ENCODE measurements at regions of chr12 and their contacts with region 1.

Region 1: DNA sequence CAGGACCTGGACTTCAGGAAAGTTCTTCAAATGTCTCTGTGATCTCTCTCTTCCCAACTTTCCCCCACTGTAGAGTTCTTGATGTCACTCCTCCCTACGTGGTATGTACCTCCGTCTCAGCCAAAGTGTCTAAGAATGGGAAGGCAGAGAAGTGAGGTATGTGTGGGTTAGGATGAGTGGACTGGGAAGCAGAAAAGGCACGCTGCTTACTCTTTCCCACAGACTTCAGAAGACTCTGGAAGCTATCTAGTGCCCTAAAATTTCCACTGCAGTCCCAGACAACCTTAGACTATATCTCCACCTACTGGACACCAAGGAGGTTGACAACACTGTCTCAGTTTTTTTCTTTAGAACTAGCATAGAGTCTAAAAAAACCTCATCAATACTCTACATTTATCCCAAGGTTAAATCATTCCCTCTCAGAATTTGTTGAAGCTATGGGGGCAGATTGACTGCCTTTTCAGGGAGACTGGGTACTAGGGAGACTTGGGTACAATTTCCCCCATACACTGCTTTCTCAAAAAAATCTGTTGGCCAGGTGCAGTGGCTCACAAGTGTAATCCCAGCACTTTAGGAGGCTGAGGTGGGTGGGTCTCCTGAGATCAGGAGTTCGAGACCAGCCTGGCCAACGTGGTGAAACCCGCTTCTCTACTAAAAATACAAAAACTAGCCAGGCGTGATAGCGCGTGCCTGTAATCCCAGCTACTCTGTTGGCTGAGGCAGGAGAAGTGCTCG is 20.6 kb upstream of the ITGA5 start:
- DNase-seq: peak in 1 of 10 donors; percentile 28
- H3K4me3 ChIP-seq: no peak overlapping the region
- H3K27ac ChIP-seq: peak overlapping the region in 1 of 59 donors; percentile 40
- H3K27me3 ChIP-seq: peaks cover 0 to 5% (median 0%) of the 10 kb centered on the region in 45 donors
- CTCF ChIP-seq: peak; percentile 58 to 90 (median 78)

Region 2: DNA sequence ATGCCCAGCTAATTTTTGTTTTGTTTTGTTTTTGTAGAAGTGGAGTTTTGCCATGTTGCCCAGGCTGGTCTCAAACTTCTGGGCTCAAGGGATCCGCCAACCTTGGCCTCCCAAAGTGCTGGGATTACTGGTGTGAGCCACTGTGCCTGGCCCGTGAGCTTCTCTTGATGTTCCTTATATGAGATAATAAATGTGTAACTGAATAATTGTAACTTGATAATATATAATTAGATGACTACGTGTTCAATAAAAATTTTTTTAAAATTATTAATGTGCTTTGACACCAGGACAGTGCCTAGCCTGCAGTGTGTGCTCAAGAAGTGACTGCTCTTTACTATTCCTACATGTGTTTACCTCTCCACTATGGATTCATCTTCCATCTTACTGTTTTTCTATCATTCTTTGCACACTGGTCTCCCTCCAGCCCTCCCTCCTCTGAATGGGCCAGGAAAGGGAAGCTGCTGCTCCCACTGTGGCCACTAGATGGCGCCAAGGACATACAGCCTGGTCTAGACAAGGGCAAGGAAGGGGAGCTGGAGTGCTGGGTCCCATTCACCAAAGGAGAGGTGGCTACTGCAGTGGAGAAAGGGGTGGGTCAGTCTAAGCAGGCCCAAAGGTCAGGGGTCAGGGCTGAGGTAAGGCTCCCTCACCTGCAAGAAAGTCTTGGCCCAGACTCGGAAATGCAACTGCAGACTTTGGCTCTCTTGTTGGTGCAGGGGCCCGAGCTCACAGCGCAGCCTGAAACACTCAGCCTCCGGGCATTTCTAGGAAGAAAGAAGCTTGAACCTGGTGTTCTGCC is 40.5 kb before region 1 on chr12:
- intact Hi-C with region 1: loop called (anchors 2 to 5 kb)
- DNase-seq: peak; percentile 73 to 92 (median 85)
- H3K4me3 ChIP-seq: no peak overlapping the region
- H3K27ac ChIP-seq: no peak overlapping the region
- H3K27me3 ChIP-seq: no peaks in the 10 kb centered on the region
- CTCF ChIP-seq: peak; percentile 75 to 98 (median 96)

Region 3: GRCh38 chr12:54404061-54405004 is 35.4 kb before region 1 on chr12:
- intact Hi-C with region 1: loop called (anchors 2 to 5 kb)
- DNase-seq: no peak
- H3K4me3 ChIP-seq: no peak overlapping the region
- H3K27ac ChIP-seq: no peak overlapping the region
- H3K27me3 ChIP-seq: no peaks in the 10 kb centered on the region
- CTCF ChIP-seq: peak; percentile 58 to 92 (median 82)